Naive thymus-derived CD4-positive, alpha-beta T cell (primary cell): ENCODE measurements at regions of chr20 and their contacts with region 1.

Region 1: DNA sequence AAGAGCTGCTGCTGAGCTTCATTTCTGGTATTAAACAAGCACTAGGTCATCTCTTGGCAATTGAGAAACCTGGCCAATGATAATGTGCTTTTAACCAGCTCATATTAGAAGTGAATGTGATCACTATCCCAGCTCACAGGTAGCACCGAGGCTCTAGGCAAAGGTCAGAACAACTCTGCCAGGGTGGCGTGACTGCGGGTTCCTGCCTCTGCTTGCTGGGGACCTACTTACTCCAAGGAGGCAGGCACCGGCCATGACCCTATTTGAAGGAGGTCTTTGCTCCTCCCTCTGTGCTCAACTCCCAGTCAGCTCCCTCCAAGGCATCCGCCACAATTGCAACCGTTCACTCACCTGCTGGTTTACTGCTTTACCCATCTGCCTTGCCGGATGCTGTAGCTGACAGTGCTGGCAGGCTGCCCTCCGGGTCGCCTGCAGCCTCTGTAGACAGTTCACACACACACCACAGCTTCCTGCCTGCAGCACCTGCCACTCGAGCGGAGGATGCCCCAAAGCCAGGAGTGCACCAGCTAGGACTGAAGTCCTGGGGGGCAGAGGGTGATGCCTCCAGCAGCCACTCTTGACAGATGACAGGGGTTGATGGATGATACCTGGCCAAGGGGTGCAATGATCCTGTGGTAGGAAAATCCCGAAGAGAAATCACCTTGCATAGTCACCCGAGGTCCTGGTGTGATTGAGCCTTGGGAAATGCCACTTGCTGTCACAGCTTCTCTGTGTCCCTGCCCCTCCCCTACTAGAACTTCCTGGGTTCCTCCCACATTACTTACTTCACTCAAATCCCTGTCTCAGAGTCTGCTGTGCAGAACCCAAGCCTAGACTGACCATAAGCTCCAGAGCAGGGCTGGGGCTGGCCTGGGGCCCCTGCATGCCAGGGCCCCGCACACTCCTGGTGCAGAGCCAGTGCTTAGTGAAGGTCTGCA is 8.8 kb upstream of the VSX1 start:
- DNase-seq: peak in 8 of 9 donors; percentile 55 to 87 (median 82)
- ATAC-seq: peak; percentile 98
- H3K4me3 ChIP-seq: peak overlapping the region; percentile 36
- H3K4me3 Mint-ChIP-seq: peak overlapping the region; percentile 40 to 79 (median 66)
- H3K27ac ChIP-seq: peak overlapping the region; percentile 41
- H3K27ac Mint-ChIP-seq: peak overlapping the region; percentile 37 to 90 (median 75)
- H3K4me1 ChIP-seq: peaks cover 21 to 27% of the 10 kb centered on the region in 2 donors
- H3K4me1 Mint-ChIP-seq: peaks cover 12 to 56% (median 42%) of the 10 kb centered on the region in 7 donors
- H3K27me3 ChIP-seq: no peaks in the 10 kb centered on the region
- H3K27me3 Mint-ChIP-seq: peaks cover 6 to 19% (median 7%) of the 10 kb centered on the region in 5 donors

Region 2: DNA sequence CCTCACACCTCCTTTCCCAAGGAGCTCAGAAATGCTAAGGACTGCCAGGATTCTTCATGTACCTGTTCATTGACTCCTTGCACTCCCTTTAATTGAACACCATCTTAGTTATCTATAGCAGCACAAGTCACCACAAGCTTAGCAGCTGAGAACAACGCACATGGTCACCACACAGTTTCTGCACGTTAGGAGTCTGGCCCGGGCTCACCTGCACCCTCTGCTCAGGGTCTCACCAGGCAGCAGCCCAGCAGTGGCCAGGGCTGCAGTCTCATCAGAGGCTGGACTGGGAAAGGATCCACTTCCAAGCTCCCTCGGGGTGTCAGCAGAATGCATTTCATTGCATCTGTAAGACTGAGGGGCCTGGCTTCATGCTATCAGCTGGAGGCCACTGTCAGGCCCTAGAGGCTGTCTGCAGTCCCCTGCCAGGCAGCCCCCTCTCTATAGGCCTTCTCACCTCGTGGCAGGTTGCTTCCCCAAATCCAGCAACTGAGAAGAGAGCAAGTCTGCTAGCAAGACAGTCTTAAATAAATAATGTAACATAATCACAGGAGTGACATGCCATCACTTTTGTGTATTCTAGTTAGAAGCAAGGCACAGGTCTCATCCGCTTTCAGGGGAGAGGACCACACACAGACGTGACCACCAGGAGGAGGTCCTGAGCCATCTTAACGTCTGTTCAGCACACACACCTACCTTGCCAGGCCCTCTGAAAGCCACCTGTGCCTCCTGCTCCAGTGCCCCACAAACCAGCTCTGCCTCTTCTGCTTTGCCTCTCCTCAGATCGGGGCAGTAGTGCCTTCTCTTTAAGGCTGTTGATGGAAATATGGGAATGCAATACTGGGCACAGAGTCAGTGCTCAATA is 306.9 kb before region 1 on chr20:
- CTCF ChIA-PET with region 1: no interaction called
- POLR2A ChIA-PET with region 1: no interaction called
- intact Hi-C with region 1: no loop called
- DNase-seq: peak in 1 of 9 donors; percentile 11
- ATAC-seq: no peak
- H3K4me3 ChIP-seq: no peak overlapping the region
- H3K4me3 Mint-ChIP-seq: no peak overlapping the region
- H3K27ac ChIP-seq: no peak overlapping the region
- H3K27ac Mint-ChIP-seq: peak overlapping the region in 1 of 9 donors; percentile 38
- H3K4me1 ChIP-seq: no peaks in the 10 kb centered on the region
- H3K4me1 Mint-ChIP-seq: peaks cover 0 to 17% (median 5%) of the 10 kb centered on the region in 7 donors
- H3K27me3 ChIP-seq: no peaks in the 10 kb centered on the region
- H3K27me3 Mint-ChIP-seq: peaks cover 10 to 18% (median 12%) of the 10 kb centered on the region in 5 donors

Region 3: DNA sequence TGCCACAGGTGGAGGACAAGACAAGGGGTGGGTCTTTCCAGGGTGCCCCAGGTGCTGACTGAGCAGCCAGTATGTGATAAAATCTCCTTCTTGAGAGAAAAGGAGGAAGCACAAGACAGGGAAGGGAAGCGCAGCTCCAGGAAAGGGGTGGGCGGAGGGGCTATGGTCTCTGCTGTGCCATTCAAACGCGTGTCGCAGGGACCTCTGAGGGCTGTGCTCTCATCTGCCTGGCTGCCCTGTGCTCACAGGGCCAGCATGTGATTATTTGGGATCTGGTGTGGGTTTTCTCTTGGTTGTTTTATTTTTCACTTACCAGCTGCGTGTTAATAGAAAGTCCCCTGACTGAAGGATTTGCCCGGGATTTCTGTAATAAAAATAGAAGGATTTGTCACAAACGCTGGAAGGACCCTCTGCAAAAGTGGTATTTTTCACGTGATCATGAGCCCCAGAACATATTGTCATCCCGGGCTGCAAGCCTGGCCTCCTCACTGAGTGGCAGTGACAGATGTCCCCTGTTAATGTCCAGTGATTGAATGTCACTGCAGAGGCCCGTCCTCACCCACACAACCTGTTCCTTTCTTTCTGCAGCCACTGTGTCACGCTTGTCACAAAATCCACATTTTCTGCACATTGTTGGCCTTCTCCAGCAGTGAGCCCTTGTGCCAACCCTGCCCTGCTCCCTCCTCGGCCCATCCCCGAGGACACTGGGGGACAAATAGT is 26.1 kb after region 1 on chr20:
- CTCF ChIA-PET with region 1: no interaction called
- POLR2A ChIA-PET with region 1: no interaction called
- intact Hi-C with region 1: loop called in 1 of 2 experiments (anchors 2 kb)
- DNase-seq: no peak
- ATAC-seq: no peak
- H3K4me3 ChIP-seq: no peak overlapping the region
- H3K4me3 Mint-ChIP-seq: no peak overlapping the region
- H3K27ac ChIP-seq: no peak overlapping the region
- H3K27ac Mint-ChIP-seq: no peak overlapping the region
- H3K4me1 ChIP-seq: no peaks in the 10 kb centered on the region
- H3K4me1 Mint-ChIP-seq: peaks cover 0 to 1% (median 0%) of the 10 kb centered on the region in 7 donors
- H3K27me3 ChIP-seq: no peaks in the 10 kb centered on the region
- H3K27me3 Mint-ChIP-seq: peaks cover 4 to 19% (median 8%) of the 10 kb centered on the region in 5 donors

Region 4: DNA sequence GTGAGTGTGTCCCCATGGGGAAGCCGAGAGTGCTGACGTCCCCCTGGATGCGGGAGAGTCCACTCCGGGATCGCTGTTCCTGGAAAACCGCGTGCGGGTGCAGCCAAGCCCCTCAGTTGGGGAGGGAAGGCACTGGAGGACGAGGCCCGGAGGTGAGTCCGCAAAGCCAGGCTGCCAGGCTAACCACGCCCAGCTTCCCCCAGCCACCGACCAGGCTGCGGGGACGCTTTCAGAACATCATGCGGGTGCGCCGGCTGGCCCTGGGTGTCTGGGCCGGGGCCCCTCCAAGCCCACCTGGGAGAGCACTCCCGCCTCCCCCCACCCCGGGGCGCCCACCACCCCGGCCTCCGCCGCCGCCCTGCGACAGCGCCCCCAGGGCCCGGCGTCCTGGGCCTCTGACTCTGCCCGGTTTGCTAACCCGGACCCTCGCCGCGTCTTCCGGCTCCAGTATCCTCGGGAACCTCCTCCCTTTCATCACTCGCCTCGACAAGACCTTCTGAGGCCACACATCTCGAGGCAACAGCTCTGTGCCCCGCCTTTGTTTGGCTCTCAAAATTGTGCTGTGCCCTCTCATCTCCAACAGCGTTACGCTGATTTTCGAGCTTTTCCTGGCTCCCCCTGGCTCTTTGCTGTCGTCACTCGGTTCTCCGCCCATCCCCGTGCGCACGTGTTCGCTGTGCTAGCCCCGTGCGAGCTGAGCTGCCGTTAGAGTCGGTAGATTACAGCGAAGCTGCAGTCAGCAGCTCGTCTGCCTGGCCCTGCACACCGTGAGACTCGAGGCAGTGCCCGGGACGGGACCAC is 57.6 kb after region 1 on chr20:
- CTCF ChIA-PET with region 1: interaction called, 4 read pairs
- POLR2A ChIA-PET with region 1: no interaction called
- intact Hi-C with region 1: loop called in 1 of 2 experiments (anchors 2 kb)
- DNase-seq: peak; percentile 35 to 82 (median 79)
- ATAC-seq: peak; percentile 94
- H3K4me3 ChIP-seq: peak overlapping the region; percentile 65
- H3K4me3 Mint-ChIP-seq: peak overlapping the region; percentile 84 to 97 (median 90)
- H3K27ac ChIP-seq: peak overlapping the region; percentile 38
- H3K27ac Mint-ChIP-seq: peak overlapping the region in 8 of 9 donors; percentile 73 to 99 (median 90)
- H3K4me1 ChIP-seq: peaks cover 0 to 12% of the 10 kb centered on the region in 2 donors
- H3K4me1 Mint-ChIP-seq: peaks cover 5 to 7% (median 6%) of the 10 kb centered on the region in 7 donors
- H3K27me3 ChIP-seq: no peaks in the 10 kb centered on the region
- H3K27me3 Mint-ChIP-seq: peaks cover 4 to 30% (median 8%) of the 10 kb centered on the region in 5 donors

Region 5: GRCh38 chr20:25525295-25526266 is 434.8 kb after region 1 on chr20:
- CTCF ChIA-PET with region 1: no interaction called
- POLR2A ChIA-PET with region 1: no interaction called
- intact Hi-C with region 1: no loop called
- DNase-seq: no peak
- ATAC-seq: no peak
- H3K4me3 ChIP-seq: no peak overlapping the region
- H3K4me3 Mint-ChIP-seq: no peak overlapping the region
- H3K27ac ChIP-seq: no peak overlapping the region
- H3K27ac Mint-ChIP-seq: no peak overlapping the region
- H3K4me1 ChIP-seq: no peaks in the 10 kb centered on the region
- H3K4me1 Mint-ChIP-seq: no peaks in the 10 kb centered on the region
- H3K27me3 ChIP-seq: no peaks in the 10 kb centered on the region
- H3K27me3 Mint-ChIP-seq: no peaks in the 10 kb centered on the region

Region 6: DNA sequence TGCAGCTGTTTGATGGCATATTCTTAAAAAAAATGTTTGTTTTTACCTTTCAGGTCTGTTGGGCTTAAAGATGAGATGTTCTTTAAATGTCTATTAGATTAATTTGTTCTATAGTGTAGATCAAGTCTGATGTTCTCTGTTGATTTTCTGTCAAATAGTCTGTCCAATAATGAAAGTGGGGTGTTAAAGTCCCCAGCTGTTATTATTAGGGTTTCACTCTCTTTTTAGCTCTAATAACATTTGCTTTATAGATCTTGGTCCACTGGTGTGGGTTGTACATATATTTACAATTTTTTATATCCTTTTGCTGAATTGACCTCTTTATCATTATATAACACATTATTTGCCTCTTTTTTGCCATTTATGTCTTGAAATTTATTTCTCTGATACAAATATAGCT is 616.9 kb after region 1 on chr20:
- CTCF ChIA-PET with region 1: no interaction called
- POLR2A ChIA-PET with region 1: no interaction called
- intact Hi-C with region 1: no loop called
- DNase-seq: no peak
- ATAC-seq: no peak
- H3K4me3 ChIP-seq: no peak overlapping the region
- H3K4me3 Mint-ChIP-seq: peak overlapping the region in 3 of 10 donors; percentile 20 to 65 (median 60)
- H3K27ac ChIP-seq: no peak overlapping the region
- H3K27ac Mint-ChIP-seq: peak overlapping the region in 6 of 9 donors; percentile 14 to 64 (median 44)
- H3K4me1 ChIP-seq: peaks cover 9 to 18% of the 10 kb centered on the region in 2 donors
- H3K4me1 Mint-ChIP-seq: peaks cover 7 to 38% (median 30%) of the 10 kb centered on the region in 7 donors
- H3K27me3 ChIP-seq: no peaks in the 10 kb centered on the region
- H3K27me3 Mint-ChIP-seq: peaks cover 0 to 6% (median 0%) of the 10 kb centered on the region in 5 donors